ENCODE measurements at regions of chr3 and their contacts with region 1.

Region 1: GRCh38 chr3:132535575-132536441 is 61.3 kb upstream of the ACKR4 start:
- DNase-seq: peak; percentile 62
- ATAC-seq: peak; percentile 31
- H3K4me3 ChIP-seq: no peak overlapping the region
- H3K4me3 Mint-ChIP-seq: no peak overlapping the region
- H3K27ac ChIP-seq: no peak overlapping the region
- H3K27ac Mint-ChIP-seq: no peak overlapping the region
- H3K4me1 ChIP-seq: no peaks in the 10 kb centered on the region
- H3K4me1 Mint-ChIP-seq: no peaks in the 10 kb centered on the region
- H3K27me3 ChIP-seq: no peaks in the 10 kb centered on the region
- H3K27me3 Mint-ChIP-seq: no peaks in the 10 kb centered on the region
- CTCF ChIP-seq: peak; percentile 79

Region 2: GRCh38 chr3:132210476-132211346 is 325.1 kb before region 1 on chr3:
- CTCF ChIA-PET with region 1: no interaction called
- POLR2A ChIA-PET with region 1: no interaction called
- intact Hi-C with region 1: no loop called
- DNase-seq: no peak
- ATAC-seq: no peak
- H3K4me3 ChIP-seq: no peak overlapping the region
- H3K4me3 Mint-ChIP-seq: no peak overlapping the region
- H3K27ac ChIP-seq: no peak overlapping the region
- H3K27ac Mint-ChIP-seq: no peak overlapping the region
- H3K4me1 ChIP-seq: no peaks in the 10 kb centered on the region
- H3K4me1 Mint-ChIP-seq: no peaks in the 10 kb centered on the region
- H3K27me3 ChIP-seq: no peaks in the 10 kb centered on the region
- H3K27me3 Mint-ChIP-seq: peaks cover 20% of the 10 kb centered on the region
- CTCF ChIP-seq: no peak

Region 3: GRCh38 chr3:132549890-132550578 is 14.2 kb after region 1 on chr3:
- CTCF ChIA-PET with region 1: interaction called, 17 read pairs
- POLR2A ChIA-PET with region 1: interaction called, 12 read pairs
- intact Hi-C with region 1: no loop called
- DNase-seq: no peak
- ATAC-seq: no peak
- H3K4me3 ChIP-seq: no peak overlapping the region
- H3K4me3 Mint-ChIP-seq: no peak overlapping the region
- H3K27ac ChIP-seq: peak overlapping the region in 1 of 2 donors; percentile 39
- H3K27ac Mint-ChIP-seq: peak overlapping the region; percentile 1
- H3K4me1 ChIP-seq: peaks cover 0 to 7% of the 10 kb centered on the region in 2 donors
- H3K4me1 Mint-ChIP-seq: peaks cover 8% of the 10 kb centered on the region
- H3K27me3 ChIP-seq: no peaks in the 10 kb centered on the region
- H3K27me3 Mint-ChIP-seq: no peaks in the 10 kb centered on the region
- CTCF ChIP-seq: no peak

Region 4: GRCh38 chr3:132641837-132642538 is 106.2 kb after region 1 on chr3:
- CTCF ChIA-PET with region 1: interaction called, 86 read pairs
- POLR2A ChIA-PET with region 1: no interaction called
- intact Hi-C with region 1: loop called (anchors 1 kb)
- DNase-seq: peak; percentile 54
- ATAC-seq: no peak
- H3K4me3 ChIP-seq: no peak overlapping the region
- H3K4me3 Mint-ChIP-seq: no peak overlapping the region
- H3K27ac ChIP-seq: no peak overlapping the region
- H3K27ac Mint-ChIP-seq: no peak overlapping the region
- H3K4me1 ChIP-seq: no peaks in the 10 kb centered on the region
- H3K4me1 Mint-ChIP-seq: peaks cover 2% of the 10 kb centered on the region
- H3K27me3 ChIP-seq: no peaks in the 10 kb centered on the region
- H3K27me3 Mint-ChIP-seq: no peaks in the 10 kb centered on the region
- CTCF ChIP-seq: peak; percentile 89

Region 5: GRCh38 chr3:133384331-133385027 is 848.7 kb after region 1 on chr3:
- CTCF ChIA-PET with region 1: no interaction called
- POLR2A ChIA-PET with region 1: no interaction called
- intact Hi-C with region 1: loop called (anchors 10 kb)
- DNase-seq: peak; percentile 44
- ATAC-seq: peak; percentile 54
- H3K4me3 ChIP-seq: no peak overlapping the region
- H3K4me3 Mint-ChIP-seq: no peak overlapping the region
- H3K27ac ChIP-seq: no peak overlapping the region
- H3K27ac Mint-ChIP-seq: no peak overlapping the region
- H3K4me1 ChIP-seq: peaks cover 0 to 3% of the 10 kb centered on the region in 2 donors
- H3K4me1 Mint-ChIP-seq: peaks cover 2% of the 10 kb centered on the region
- H3K27me3 ChIP-seq: peaks cover 0 to 3% (median 0%) of the 10 kb centered on the region in 4 experiments
- H3K27me3 Mint-ChIP-seq: no peaks in the 10 kb centered on the region
- CTCF ChIP-seq: peak; percentile 48

Measured in B cell (primary cell).